ENCODE measurements at regions of chr4 and their contacts with region 1.

Region 1: GRCh38 chr4:48546336-48546735 is 56.3 kb downstream of the ZAR1 start:
- DNase-seq: no peak
- CTCF ChIP-seq: peak; percentile 58

Region 2: GRCh38 chr4:48127682-48128394 is 418.5 kb before region 1 on chr4:
- in situ Hi-C with region 1: loop called (anchors 25 kb)
- DNase-seq: peak; percentile 55
- CTCF ChIP-seq: peak; percentile 54